Activated naive CD4-positive, alpha-beta T cell treated with anti-CD3 and anti-CD28 coated beads for 36 hours (primary cell): ENCODE measurements at regions of chr21 and their contacts with region 1.

Region 1: GRCh38 chr21:33069976-33070811 is at the start of gene OLIG1:
- DNase-seq: peak; percentile 25
- H3K4me3 Mint-ChIP-seq: peak within 1 kb of the TSS; percentile 65
- H3K27ac Mint-ChIP-seq: no peak within 1 kb of the TSS
- H3K4me1 Mint-ChIP-seq: peaks cover 10% of the 10 kb centered on the region
- H3K27me3 Mint-ChIP-seq: peaks cover 53% of the 10 kb centered on the region
- total RNA-seq, gene OLIG1: not detected

Region 2: DNA sequence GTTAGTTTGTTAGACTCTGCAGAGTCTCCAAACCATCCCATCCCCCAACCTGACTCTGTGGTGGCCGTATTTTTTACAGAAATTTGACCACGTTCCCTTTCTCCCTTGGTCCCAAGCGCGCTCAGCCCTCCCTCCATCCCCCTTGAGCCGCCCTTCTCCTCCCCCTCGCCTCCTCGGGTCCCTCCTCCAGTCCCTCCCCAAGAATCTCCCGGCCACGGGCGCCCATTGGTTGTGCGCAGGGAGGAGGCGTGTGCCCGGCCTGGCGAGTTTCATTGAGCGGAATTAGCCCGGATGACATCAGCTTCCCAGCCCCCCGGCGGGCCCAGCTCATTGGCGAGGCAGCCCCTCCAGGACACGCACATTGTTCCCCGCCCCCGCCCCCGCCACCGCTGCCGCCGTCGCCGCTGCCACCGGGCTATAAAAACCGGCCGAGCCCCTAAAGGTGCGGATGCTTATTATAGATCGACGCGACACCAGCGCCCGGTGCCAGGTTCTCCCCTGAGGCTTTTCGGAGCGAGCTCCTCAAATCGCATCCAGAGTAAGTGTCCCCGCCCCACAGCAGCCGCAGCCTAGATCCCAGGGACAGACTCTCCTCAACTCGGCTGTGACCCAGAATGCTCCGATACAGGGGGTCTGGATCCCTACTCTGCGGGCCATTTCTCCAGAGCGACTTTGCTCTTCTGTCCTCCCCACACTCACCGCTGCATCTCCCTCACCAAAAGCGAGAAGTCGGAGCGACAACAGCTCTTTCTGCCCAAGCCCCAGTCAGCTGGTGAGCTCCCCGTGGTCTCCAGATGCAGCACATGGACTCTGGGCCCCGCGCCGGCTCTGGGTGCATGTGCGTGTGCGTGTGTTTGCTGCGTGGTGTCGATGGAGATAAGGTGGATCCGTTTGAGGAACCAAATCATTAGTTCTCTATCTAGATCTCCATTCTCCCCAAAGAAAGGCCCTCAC is 44.4 kb before region 1 on chr21 and contains the start of gene OLIG2:
- CTCF ChIA-PET with region 1: no interaction called
- intact Hi-C with region 1: loop called (anchors 2 kb)
- DNase-seq: no peak
- H3K4me3 Mint-ChIP-seq: peak within 1 kb of the TSS; percentile 33
- H3K27ac Mint-ChIP-seq: no peak within 1 kb of the TSS
- H3K4me1 Mint-ChIP-seq: peaks cover 56% of the 10 kb centered on the region
- H3K27me3 Mint-ChIP-seq: peaks cover 86% of the 10 kb centered on the region
- total RNA-seq, gene OLIG2: not detected